CD8-positive, alpha-beta T cell (primary cell): ENCODE measurements at regions of chr2 and their contacts with region 1.

Region 1: DNA sequence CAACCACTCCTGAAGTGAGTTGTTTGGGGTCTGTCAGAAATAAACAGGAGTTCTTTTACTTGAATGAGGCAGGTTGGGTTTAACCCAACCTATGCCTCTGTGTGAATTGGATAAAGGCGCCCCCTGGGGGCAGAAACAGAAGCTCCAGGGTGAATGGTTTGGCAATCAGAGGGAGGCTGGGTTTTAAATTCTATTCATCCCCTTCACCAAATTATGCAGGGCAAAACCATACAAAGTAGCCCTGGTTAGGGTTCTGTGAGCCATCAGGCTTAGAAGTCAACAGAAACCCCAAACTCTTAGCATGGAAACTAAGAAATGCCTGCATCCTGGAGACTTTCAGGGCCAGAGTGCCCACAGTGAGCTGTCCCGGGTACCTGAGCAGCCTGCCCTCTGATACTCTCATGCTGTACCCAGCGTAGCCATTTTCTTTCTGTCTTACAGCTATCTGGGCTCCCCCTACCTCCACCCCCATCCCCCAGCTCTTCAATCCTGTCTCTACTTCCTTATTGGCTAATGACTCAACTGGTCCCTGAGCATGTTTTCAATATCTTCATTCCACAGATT is 241.5 kb downstream of the ICOS start:
- DNase-seq: peak; percentile 36 to 80 (median 61)
- ATAC-seq: peak; percentile 48
- H3K4me3 ChIP-seq: no peak overlapping the region
- H3K4me3 Mint-ChIP-seq: no peak overlapping the region
- H3K27ac ChIP-seq: no peak overlapping the region
- H3K27ac Mint-ChIP-seq: no peak overlapping the region
- H3K4me1 ChIP-seq: no peaks in the 10 kb centered on the region
- H3K4me1 Mint-ChIP-seq: no peaks in the 10 kb centered on the region
- H3K27me3 ChIP-seq: peaks cover 0 to 3% of the 10 kb centered on the region in 2 experiments
- H3K27me3 Mint-ChIP-seq: peaks cover 6% of the 10 kb centered on the region
- CTCF ChIP-seq: peak; percentile 69

Region 2: DNA sequence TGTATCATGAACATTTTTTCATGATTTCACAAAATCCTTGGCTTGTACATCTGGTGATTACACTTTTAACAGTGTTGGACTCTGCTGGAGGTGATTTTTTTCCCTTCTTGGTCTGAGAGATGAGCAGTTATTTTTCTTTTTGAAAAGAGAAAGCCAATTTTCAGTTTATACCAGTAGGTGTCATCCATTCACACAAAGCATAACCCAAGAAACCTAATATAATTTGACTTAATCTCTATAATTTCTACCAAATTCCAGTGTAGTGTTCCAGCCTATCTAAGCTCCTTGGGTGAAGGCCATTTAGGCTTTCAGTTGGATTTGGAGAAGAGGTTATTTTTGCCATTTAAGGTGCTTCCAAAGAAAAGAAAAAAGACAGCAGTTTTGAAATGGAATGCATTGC is 249.2 kb before region 1 on chr2:
- CTCF ChIA-PET with region 1: interaction called, 11 read pairs
- POLR2A ChIA-PET with region 1: no interaction called
- intact Hi-C with region 1: loop called (anchors 1 to 2 kb)
- DNase-seq: peak in 2 of 9 experiments; percentile 43 to 59
- ATAC-seq: peak; percentile 42
- H3K4me3 ChIP-seq: no peak overlapping the region
- H3K4me3 Mint-ChIP-seq: no peak overlapping the region
- H3K27ac ChIP-seq: no peak overlapping the region
- H3K27ac Mint-ChIP-seq: no peak overlapping the region
- H3K4me1 ChIP-seq: peaks cover 15% of the 10 kb centered on the region
- H3K4me1 Mint-ChIP-seq: peaks cover 33% of the 10 kb centered on the region
- H3K27me3 ChIP-seq: no peaks in the 10 kb centered on the region
- H3K27me3 Mint-ChIP-seq: no peaks in the 10 kb centered on the region
- CTCF ChIP-seq: peak; percentile 52

Region 3: GRCh38 chr2:204024503-204024902 is 153.6 kb before region 1 on chr2:
- CTCF ChIA-PET with region 1: interaction called, 4 read pairs
- POLR2A ChIA-PET with region 1: no interaction called
- intact Hi-C with region 1: loop called in 1 of 2 experiments (anchors 5 kb)
- DNase-seq: peak in 1 of 9 experiments; percentile 20
- ATAC-seq: no peak
- H3K4me3 ChIP-seq: no peak overlapping the region
- H3K4me3 Mint-ChIP-seq: no peak overlapping the region
- H3K27ac ChIP-seq: no peak overlapping the region
- H3K27ac Mint-ChIP-seq: no peak overlapping the region
- H3K4me1 ChIP-seq: no peaks in the 10 kb centered on the region
- H3K4me1 Mint-ChIP-seq: peaks cover 18% of the 10 kb centered on the region
- H3K27me3 ChIP-seq: no peaks in the 10 kb centered on the region
- H3K27me3 Mint-ChIP-seq: no peaks in the 10 kb centered on the region
- CTCF ChIP-seq: no peak

Region 4: DNA sequence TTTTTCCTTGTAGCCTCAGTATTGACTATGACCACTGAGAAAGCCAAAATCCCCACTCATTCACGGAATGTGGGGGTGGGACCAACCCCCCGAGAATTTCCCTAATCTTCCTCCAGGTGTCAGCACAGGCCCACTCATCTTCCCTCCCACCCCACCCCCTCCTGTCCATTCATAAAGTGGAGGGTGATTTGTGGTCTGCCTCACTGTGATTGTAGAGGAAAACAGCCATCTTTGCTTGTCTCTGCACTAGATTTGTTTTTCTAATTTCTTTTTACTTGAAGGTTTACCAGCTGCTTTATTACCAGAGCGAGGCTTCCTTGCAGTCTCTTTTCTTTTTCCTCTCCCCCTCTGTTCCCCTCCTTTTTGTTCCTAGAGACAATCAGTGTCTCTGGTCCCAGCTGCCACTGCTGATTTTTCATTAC is 69.7 kb before region 1 on chr2:
- CTCF ChIA-PET with region 1: interaction called, 146 read pairs
- POLR2A ChIA-PET with region 1: no interaction called
- intact Hi-C with region 1: loop called (anchors 1 kb)
- DNase-seq: peak; percentile 5 to 81 (median 45)
- ATAC-seq: peak; percentile 74
- H3K4me3 ChIP-seq: no peak overlapping the region
- H3K4me3 Mint-ChIP-seq: peak overlapping the region; percentile 57
- H3K27ac ChIP-seq: no peak overlapping the region
- H3K27ac Mint-ChIP-seq: no peak overlapping the region
- H3K4me1 ChIP-seq: peaks cover 30% of the 10 kb centered on the region
- H3K4me1 Mint-ChIP-seq: peaks cover 37% of the 10 kb centered on the region
- H3K27me3 ChIP-seq: no peaks in the 10 kb centered on the region
- H3K27me3 Mint-ChIP-seq: no peaks in the 10 kb centered on the region
- CTCF ChIP-seq: peak; percentile 82

Region 5: GRCh38 chr2:204127238-204127637 is 50.8 kb before region 1 on chr2:
- CTCF ChIA-PET with region 1: no interaction called
- POLR2A ChIA-PET with region 1: no interaction called
- intact Hi-C with region 1: no loop called
- DNase-seq: no peak
- ATAC-seq: no peak
- H3K4me3 ChIP-seq: no peak overlapping the region
- H3K4me3 Mint-ChIP-seq: no peak overlapping the region
- H3K27ac ChIP-seq: no peak overlapping the region
- H3K27ac Mint-ChIP-seq: no peak overlapping the region
- H3K4me1 ChIP-seq: no peaks in the 10 kb centered on the region
- H3K4me1 Mint-ChIP-seq: no peaks in the 10 kb centered on the region
- H3K27me3 ChIP-seq: no peaks in the 10 kb centered on the region
- H3K27me3 Mint-ChIP-seq: peaks cover 8% of the 10 kb centered on the region
- CTCF ChIP-seq: no peak

Region 6: GRCh38 chr2:204145263-204145751 is 32.8 kb before region 1 on chr2:
- CTCF ChIA-PET with region 1: interaction called, 43 read pairs
- POLR2A ChIA-PET with region 1: no interaction called
- intact Hi-C with region 1: loop called (anchors 1 kb)
- DNase-seq: peak; percentile 50 to 84 (median 76)
- ATAC-seq: peak; percentile 92
- H3K4me3 ChIP-seq: peak overlapping the region; percentile 46 to 49
- H3K4me3 Mint-ChIP-seq: peak overlapping the region; percentile 90
- H3K27ac ChIP-seq: no peak overlapping the region
- H3K27ac Mint-ChIP-seq: peak overlapping the region; percentile 84
- H3K4me1 ChIP-seq: no peaks in the 10 kb centered on the region
- H3K4me1 Mint-ChIP-seq: peaks cover 10% of the 10 kb centered on the region
- H3K27me3 ChIP-seq: no peaks in the 10 kb centered on the region
- H3K27me3 Mint-ChIP-seq: peaks cover 18% of the 10 kb centered on the region
- CTCF ChIP-seq: peak; percentile 98